ENCODE measurements at regions of chr2 and their contacts with region 1.

Region 1: GRCh38 chr2:160194946-160195345 is 5.1 kb downstream of the ITGB6 start:
- DNase-seq: peak; percentile 37
- ATAC-seq: peak; percentile 72
- H3K4me3 Mint-ChIP-seq: no peak overlapping the region
- H3K27ac Mint-ChIP-seq: no peak overlapping the region
- H3K4me1 Mint-ChIP-seq: peaks cover 7% of the 10 kb centered on the region
- H3K27me3 Mint-ChIP-seq: peaks cover 3% of the 10 kb centered on the region
- CTCF ChIP-seq: no peak

Region 2: GRCh38 chr2:160210599-160211138 is 15.7 kb after region 1 on chr2:
- CTCF ChIA-PET with region 1: interaction called, 12 read pairs
- POLR2A ChIA-PET with region 1: no interaction called
- intact Hi-C with region 1: no loop called
- DNase-seq: peak; percentile 82
- ATAC-seq: peak; percentile 86
- H3K4me3 Mint-ChIP-seq: no peak overlapping the region
- H3K27ac Mint-ChIP-seq: no peak overlapping the region
- H3K4me1 Mint-ChIP-seq: peaks cover 32% of the 10 kb centered on the region
- H3K27me3 Mint-ChIP-seq: peaks cover 5% of the 10 kb centered on the region
- CTCF ChIP-seq: peak; percentile 90

Measured in activated CD8-positive, alpha-beta T cell treated with anti-CD3 and anti-CD28 coated beads for 36 hours (primary cell).